Activated naive CD8-positive, alpha-beta T cell treated with anti-CD3 and anti-CD28 coated beads, Interleukin-2, amount 10 ng/mL, durations not matched to agents 7 days and 5 days (primary cell): ENCODE measurements at regions of chr2 and their contacts with region 1.

Region 1: DNA sequence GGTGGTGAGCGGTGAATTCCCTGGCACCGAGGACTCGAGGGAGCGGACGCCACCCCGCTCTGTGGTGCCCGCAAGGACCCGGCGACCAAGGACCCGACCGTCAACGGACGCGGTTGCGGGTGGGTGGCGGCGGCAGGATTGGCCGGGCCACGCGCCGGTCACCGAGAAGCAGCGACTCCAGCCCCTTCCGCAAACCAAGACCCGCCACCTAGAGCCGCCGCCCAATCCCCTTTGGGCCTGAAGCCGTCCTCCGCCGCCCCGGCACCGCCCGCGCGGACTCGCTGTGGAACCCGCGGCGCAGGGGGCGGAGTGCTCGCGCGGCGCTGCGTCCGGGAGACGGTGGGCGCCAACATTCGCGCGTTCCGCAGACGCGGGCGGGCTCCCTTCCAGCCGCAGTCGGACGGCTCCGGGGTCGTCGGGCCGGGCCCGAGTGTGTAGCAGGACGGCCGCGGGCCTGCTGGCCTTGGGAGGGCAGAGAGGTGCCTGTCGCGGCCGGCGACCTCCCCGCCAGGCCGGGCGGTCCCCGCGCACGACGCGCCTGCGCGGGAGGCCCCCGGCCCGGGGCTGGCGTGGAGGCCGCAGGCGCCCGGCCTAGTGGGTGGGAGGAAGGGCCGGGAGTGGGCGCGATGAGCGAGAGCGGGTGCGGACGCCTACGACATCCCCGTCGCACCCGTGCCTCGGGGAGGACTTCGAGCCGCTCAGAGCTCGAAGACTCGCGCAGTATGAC is at the starts of genes FAM228B and PFN4:
- DNase-seq: peak; percentile 82
- ATAC-seq: peak; percentile 94
- H3K4me3 Mint-ChIP-seq: peak within 1 kb of the TSS; percentile 84
- H3K27ac Mint-ChIP-seq: peak within 1 kb of the TSS; percentile 76
- H3K4me1 Mint-ChIP-seq: peaks cover 16% of the 10 kb centered on the region
- H3K27me3 Mint-ChIP-seq: peaks cover 2% of the 10 kb centered on the region
- total RNA-seq, gene FAM228B: 13.1 to 14.9 TPM
- total RNA-seq, gene PFN4: not detected

Region 2: DNA sequence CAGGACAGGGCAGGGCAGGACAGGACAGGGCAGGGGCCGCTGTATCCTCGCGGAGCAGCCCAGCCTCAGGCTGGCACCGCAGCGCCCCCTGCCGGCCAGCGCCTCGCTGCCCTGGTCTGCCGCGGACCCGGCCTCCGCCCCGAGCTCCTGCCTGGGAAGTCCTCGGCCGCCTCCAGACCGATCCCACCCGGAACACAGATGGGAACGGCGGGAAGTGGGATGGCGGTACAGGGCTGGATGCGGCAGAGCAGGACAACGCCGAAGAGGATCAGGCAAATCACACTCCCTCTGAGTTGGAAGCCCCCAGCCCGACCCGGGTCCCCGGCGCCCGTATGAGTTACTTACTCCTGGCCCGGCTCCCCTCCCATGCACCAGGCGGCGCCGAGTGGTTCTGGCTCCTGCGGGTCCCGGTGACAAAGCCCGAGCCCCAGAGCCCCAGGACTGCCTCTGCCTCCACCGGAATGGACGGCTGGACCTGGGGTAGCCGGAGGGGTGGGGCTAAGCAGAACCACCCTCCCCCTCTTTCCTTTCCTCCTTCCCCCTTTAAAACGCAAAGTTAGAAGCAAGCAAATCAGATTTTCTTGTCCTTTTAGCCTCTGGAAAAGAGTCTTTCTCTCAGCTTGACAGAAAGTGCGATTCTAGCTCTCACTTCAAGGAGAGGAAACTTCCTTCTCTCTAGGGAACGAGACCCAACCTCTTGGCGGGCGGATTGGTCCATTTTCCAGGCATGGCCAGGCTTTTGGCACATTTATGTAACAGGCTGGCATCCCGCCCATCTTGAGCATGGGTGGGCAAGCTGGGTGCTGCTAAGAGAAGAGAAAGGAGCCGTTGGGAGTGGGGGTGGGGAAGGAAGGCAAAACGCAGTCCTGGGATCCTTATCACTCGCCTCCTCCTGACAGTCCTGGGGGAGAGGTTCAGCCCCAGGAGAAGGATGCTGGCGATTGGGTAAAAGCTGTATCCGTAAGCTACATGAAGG is 38.7 kb before region 1 on chr2 and contains the start of gene TP53I3:
- POLR2A ChIA-PET with region 1: interaction called, 10 read pairs
- DNase-seq: peak; percentile 96
- ATAC-seq: peak; percentile 93
- H3K4me3 Mint-ChIP-seq: peak within 1 kb of the TSS; percentile 96
- H3K27ac Mint-ChIP-seq: peak within 1 kb of the TSS; percentile 95
- H3K4me1 Mint-ChIP-seq: peaks cover 25% of the 10 kb centered on the region
- H3K27me3 Mint-ChIP-seq: no peaks in the 10 kb centered on the region
- total RNA-seq, gene TP53I3: 3.6 to 3.7 TPM

Region 3: GRCh38 chr2:24111407-24111901 is 11.9 kb before region 1 on chr2:
- POLR2A ChIA-PET with region 1: no interaction called
- DNase-seq: no peak
- ATAC-seq: no peak
- H3K4me3 Mint-ChIP-seq: no peak overlapping the region
- H3K27ac Mint-ChIP-seq: no peak overlapping the region
- H3K4me1 Mint-ChIP-seq: no peaks in the 10 kb centered on the region
- H3K27me3 Mint-ChIP-seq: peaks cover 2% of the 10 kb centered on the region

Region 4: GRCh38 chr2:24164125-24164973 is 41.0 kb after region 1 on chr2:
- POLR2A ChIA-PET with region 1: no interaction called
- DNase-seq: peak; percentile 64
- ATAC-seq: peak; percentile 70
- H3K4me3 Mint-ChIP-seq: no peak overlapping the region
- H3K27ac Mint-ChIP-seq: no peak overlapping the region
- H3K4me1 Mint-ChIP-seq: peaks cover 2% of the 10 kb centered on the region
- H3K27me3 Mint-ChIP-seq: peaks cover 4% of the 10 kb centered on the region

Region 5: GRCh38 chr2:24191848-24192247 is 68.5 kb after region 1 on chr2:
- POLR2A ChIA-PET with region 1: no interaction called
- DNase-seq: no peak
- ATAC-seq: no peak
- H3K4me3 Mint-ChIP-seq: no peak overlapping the region
- H3K27ac Mint-ChIP-seq: no peak overlapping the region
- H3K4me1 Mint-ChIP-seq: no peaks in the 10 kb centered on the region
- H3K27me3 Mint-ChIP-seq: peaks cover 6% of the 10 kb centered on the region